ENCODE measurements at regions of chr7 and their contacts with region 1.

Region 1: GRCh38 chr7:123635551-123636359 is 19.9 kb upstream of the LMOD2 start:
- DNase-seq: no peak
- ATAC-seq: peak; percentile 62 to 77 (median 70)
- H3K4me3 ChIP-seq: peak overlapping the region in 1 of 12 donors; percentile 7
- H3K27ac ChIP-seq: peak overlapping the region in 6 of 12 donors; percentile 11 to 38 (median 32)
- H3K4me1 ChIP-seq: peaks cover 0 to 21% (median 6%) of the 10 kb centered on the region in 12 donors
- H3K27me3 ChIP-seq: no peaks in the 10 kb centered on the region
- CTCF ChIP-seq: peak; percentile 27 to 72 (median 64)
- POLR2A ChIP-seq: no peak

Region 2: DNA sequence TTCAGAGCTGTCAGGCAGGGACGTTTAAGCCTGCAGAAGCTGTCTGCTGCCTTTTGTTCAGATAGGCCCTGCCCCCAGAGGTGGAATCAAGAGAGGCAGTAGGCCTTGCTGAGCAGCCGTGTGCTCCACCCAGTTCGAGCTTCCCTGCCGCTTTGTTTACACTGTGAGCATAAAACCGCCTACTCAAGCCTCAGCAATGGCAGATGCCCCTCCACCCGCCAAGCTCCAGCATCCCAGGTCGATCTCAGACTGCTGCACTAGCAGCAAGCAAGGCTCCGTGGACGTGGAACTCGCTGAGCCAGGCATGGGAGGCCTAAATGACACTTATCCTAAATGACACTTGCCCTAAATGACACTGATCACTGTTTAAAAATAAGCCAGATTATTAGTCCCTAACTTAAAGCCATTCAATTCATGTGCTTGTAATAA is 40.9 kb before region 1 on chr7:
- intact Hi-C with region 1: loop called in 1 of 10 experiments (anchors 5 kb)
- DNase-seq: no peak
- ATAC-seq: no peak
- H3K4me3 ChIP-seq: no peak overlapping the region
- H3K27ac ChIP-seq: no peak overlapping the region
- H3K4me1 ChIP-seq: peaks cover 0 to 7% (median 0%) of the 10 kb centered on the region in 12 donors
- H3K27me3 ChIP-seq: no peaks in the 10 kb centered on the region
- CTCF ChIP-seq: no peak
- POLR2A ChIP-seq: no peak

Region 3: GRCh38 chr7:123674399-123675180 is 38.8 kb after region 1 on chr7:
- intact Hi-C with region 1: loop called in 2 of 10 experiments (anchors 5 kb)
- DNase-seq: no peak
- ATAC-seq: no peak
- H3K4me3 ChIP-seq: no peak overlapping the region
- H3K27ac ChIP-seq: peak overlapping the region in 7 of 12 donors; percentile 6 to 61 (median 37)
- H3K4me1 ChIP-seq: peaks cover 0 to 54% (median 15%) of the 10 kb centered on the region in 12 donors
- H3K27me3 ChIP-seq: no peaks in the 10 kb centered on the region
- CTCF ChIP-seq: no peak
- POLR2A ChIP-seq: no peak

Region 4: DNA sequence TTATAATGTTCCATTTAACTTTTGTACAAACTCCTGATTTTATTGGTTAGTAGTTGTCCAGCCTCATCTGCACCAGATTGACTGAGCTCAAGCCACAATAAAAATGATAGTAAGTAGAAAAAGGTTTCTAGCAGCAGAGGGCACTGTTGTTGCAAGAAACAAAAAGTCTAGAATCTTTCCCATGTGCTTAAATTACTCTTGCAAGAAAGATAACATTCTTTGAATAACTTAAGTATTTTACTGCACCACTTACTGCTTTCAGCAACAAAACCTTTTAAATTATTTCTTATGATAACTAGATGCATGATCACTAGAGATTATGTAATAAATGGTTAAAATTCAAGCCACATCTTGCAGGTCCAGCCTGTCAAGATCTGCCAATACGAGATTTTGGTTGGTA is 46.9 kb after region 1 on chr7:
- intact Hi-C with region 1: loop called in 4 of 10 experiments (anchors 5 kb)
- DNase-seq: no peak
- ATAC-seq: peak in 2 of 4 donors; percentile 24 to 40
- H3K4me3 ChIP-seq: no peak overlapping the region
- H3K27ac ChIP-seq: peak overlapping the region in 3 of 12 donors; percentile 54 to 73 (median 61)
- H3K4me1 ChIP-seq: peaks cover 0 to 41% (median 16%) of the 10 kb centered on the region in 12 donors
- H3K27me3 ChIP-seq: no peaks in the 10 kb centered on the region
- CTCF ChIP-seq: peak; percentile 31 to 70 (median 57)
- POLR2A ChIP-seq: no peak

Region 5: GRCh38 chr7:124246262-124246863 is 610.6 kb after region 1 on chr7:
- intact Hi-C with region 1: no loop called
- DNase-seq: no peak
- ATAC-seq: no peak
- H3K4me3 ChIP-seq: no peak overlapping the region
- H3K27ac ChIP-seq: no peak overlapping the region
- H3K4me1 ChIP-seq: no peaks in the 10 kb centered on the region
- H3K27me3 ChIP-seq: no peaks in the 10 kb centered on the region
- CTCF ChIP-seq: no peak
- POLR2A ChIP-seq: no peak